ENCODE measurements at regions of chr15 and their contacts with region 1.

Region 1: DNA sequence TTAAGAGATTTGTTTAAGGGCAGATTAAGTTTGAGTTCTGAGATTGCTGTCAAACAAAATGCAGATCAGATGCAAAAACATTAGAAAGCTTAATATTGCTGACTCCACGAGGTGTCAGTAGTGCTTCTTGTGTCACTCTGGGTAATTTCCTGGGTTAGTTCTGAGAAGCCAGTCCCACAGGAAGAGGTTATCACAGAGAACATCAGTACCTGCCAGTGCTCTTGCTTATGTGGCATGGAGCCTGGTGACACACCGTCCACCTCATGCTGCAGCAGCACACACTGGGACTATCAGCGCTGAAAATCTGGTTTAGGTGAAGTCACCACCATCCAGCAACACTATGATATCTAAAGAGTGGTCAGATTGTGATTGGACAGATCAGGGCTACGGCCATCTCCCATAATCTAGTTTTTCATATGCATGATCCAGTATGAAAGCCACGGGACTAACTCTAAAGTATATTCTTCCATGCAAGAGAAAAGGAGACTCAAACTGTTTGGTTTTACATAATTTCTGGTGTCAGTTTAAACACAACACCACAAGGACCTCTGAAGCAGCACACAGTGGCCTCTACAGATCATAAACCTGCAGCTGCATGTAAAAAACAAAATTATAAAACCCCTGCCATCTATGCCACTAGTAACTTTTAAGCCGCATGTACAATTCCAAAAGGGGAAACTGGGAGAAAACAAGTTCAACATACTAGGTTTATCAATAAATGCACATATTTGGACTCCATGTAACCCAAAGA is 36.1 kb upstream of the MYO5C start:
- DNase-seq: peak; percentile 69 to 86
- H3K4me3 ChIP-seq: no peak overlapping the region
- H3K27ac ChIP-seq: no peak overlapping the region
- H3K4me1 ChIP-seq: peaks cover 17% of the 10 kb centered on the region
- H3K27me3 ChIP-seq: no peaks in the 10 kb centered on the region
- CTCF ChIP-seq: peak; percentile 58

Region 2: DNA sequence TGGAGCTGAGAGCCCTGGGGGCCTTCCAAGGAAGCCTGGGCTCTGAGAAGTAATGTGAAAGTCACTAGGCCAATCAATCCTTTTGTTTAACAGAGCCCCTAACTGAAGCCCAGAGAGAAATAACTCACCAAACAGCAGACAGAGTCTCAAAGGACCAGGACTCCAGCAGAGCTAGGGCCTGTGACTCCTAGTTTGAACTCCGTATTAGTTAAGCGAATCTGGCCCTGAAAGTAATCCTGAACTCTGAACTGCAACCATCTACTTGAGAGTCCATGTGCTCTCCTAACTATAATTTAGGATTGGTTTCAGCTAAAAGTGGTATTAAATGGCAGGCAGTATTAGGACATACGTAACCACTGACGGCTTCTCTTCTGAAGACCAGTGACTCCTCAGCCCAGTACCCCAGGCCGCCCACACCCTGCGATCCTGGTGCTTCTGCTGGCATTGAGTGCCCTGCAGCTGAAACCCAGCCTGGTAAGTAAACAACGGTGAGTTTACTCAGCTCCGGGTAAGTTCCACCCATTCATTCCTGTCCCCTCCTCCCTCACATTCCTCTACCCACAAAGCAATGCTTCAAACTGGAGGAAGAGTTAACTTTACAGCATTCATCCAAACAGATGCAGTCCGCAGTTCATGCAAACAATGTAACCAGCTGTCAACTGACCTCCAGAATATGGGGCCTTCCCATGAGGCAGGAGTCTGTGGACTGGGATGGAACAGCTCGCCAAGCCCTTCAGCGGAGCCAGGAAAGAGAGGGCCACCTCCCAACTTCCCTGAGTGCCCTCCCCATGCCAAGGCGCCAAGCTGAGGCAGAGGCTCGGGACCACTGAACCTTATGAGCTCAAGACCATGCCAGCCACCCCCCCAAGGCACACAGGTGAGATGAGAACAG is 43.4 kb before region 1 on chr15:
- CTCF ChIA-PET with region 1: no interaction called
- POLR2A ChIA-PET with region 1: no interaction called
- intact Hi-C with region 1: loop called (anchors 2 kb)
- DNase-seq: peak; percentile 90 to 93
- H3K4me3 ChIP-seq: peak overlapping the region; percentile 42; the same call in 1 of the 2 replicates
- H3K27ac ChIP-seq: peak overlapping the region; percentile 93
- H3K4me1 ChIP-seq: peaks cover 45% of the 10 kb centered on the region
- H3K27me3 ChIP-seq: no peaks in the 10 kb centered on the region
- CTCF ChIP-seq: no peak

Region 3: DNA sequence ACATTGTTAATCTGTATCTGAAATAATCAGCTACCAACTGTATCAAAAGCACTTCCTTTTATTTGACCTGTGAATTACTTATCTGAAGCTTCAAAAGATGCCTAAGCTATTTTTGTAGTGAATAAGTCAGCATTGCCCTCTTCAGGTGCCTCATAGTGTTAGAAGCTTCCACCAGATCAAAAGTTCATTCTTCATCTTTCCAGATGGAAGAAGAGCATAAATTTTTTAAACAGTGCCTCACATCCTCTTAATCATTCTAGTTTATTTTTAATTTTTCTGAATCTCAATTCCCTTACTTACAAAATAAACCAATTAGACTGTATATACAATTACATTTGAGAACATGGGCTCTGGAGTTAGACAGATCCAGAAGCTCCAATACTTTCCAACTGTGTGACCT is 132.0 kb after region 1 on chr15:
- CTCF ChIA-PET with region 1: interaction called, 3 read pairs
- POLR2A ChIA-PET with region 1: no interaction called
- intact Hi-C with region 1: loop called (anchors 1 kb)
- DNase-seq: no peak
- H3K4me3 ChIP-seq: no peak overlapping the region
- H3K27ac ChIP-seq: no peak overlapping the region
- H3K4me1 ChIP-seq: no peaks in the 10 kb centered on the region
- H3K27me3 ChIP-seq: no peaks in the 10 kb centered on the region
- CTCF ChIP-seq: no peak

Region 4: GRCh38 chr15:52568601-52569256 is 237.1 kb after region 1 on chr15 and contains the start of gene ARPP19:
- CTCF ChIA-PET with region 1: no interaction called
- POLR2A ChIA-PET with region 1: no interaction called
- intact Hi-C with region 1: loop called (anchors 2 kb)
- DNase-seq: peak; percentile 77 to 88
- H3K4me3 ChIP-seq: peak within 1 kb of the TSS; percentile 94
- H3K27ac ChIP-seq: peak within 1 kb of the TSS; percentile 84
- H3K4me1 ChIP-seq: peaks cover 15% of the 10 kb centered on the region
- H3K27me3 ChIP-seq: no peaks in the 10 kb centered on the region
- CTCF ChIP-seq: no peak
- total RNA-seq, gene ARPP19: 108 and 119 TPM in 2 replicates

Region 5: DNA sequence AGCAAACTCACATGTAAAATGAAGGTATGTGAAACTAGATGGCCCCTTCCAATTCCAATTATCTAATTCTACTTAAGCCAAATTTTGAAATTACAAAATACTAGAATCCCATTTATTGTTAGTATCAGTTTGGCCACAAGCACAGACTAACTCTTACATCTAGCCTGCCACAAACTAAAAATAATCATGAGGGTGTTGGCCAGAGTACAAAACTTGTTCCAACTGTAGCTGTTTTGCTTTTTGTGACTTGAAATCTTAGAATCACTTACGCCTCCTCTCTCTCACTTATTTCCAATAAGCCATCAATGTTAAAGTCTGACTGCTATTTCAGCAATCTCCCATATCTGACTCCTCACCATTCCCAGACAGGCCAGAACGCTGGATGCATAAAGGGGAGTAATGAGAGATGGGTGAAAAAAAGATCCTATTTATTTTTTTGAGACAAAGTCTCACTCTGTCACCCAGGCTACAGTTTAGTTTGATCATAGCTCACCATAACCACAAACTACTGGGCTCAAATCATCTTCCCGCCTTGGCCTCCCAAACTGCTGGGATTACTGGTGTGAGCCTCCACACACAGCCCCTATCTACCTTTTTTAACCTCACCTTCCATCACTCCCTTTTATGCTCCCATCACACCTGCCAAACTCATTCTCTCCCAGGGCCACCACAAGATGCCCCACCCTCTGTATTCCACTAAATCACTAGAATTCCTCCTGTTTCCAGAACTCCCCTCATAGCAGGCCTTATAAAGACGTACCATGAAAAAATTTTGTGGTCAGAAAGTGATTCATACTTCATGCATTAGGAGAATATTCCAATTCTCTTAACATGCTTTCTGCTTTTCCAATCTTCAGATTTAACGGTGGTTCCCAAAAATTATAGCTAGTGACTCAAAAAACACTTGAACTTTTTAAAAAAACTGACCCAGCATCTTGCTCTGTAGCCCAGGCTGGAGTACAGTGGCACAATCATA is 311.0 kb after region 1 on chr15:
- CTCF ChIA-PET with region 1: no interaction called
- POLR2A ChIA-PET with region 1: no interaction called
- intact Hi-C with region 1: no loop called
- DNase-seq: no peak
- H3K4me3 ChIP-seq: no peak overlapping the region
- H3K27ac ChIP-seq: no peak overlapping the region
- H3K4me1 ChIP-seq: no peaks in the 10 kb centered on the region
- H3K27me3 ChIP-seq: no peaks in the 10 kb centered on the region
- CTCF ChIP-seq: no peak

Region 6: GRCh38 chr15:52735231-52736089 is 403.8 kb after region 1 on chr15:
- CTCF ChIA-PET with region 1: interaction called, 3 read pairs
- POLR2A ChIA-PET with region 1: no interaction called
- intact Hi-C with region 1: loop called (anchors 1 kb)
- DNase-seq: peak; percentile 68 to 69
- H3K4me3 ChIP-seq: no peak overlapping the region
- H3K27ac ChIP-seq: no peak overlapping the region
- H3K4me1 ChIP-seq: peaks cover 13% of the 10 kb centered on the region
- H3K27me3 ChIP-seq: no peaks in the 10 kb centered on the region
- CTCF ChIP-seq: peak; percentile 84